ENCODE measurements at regions of chr15 and their contacts with region 1.

Region 1: DNA sequence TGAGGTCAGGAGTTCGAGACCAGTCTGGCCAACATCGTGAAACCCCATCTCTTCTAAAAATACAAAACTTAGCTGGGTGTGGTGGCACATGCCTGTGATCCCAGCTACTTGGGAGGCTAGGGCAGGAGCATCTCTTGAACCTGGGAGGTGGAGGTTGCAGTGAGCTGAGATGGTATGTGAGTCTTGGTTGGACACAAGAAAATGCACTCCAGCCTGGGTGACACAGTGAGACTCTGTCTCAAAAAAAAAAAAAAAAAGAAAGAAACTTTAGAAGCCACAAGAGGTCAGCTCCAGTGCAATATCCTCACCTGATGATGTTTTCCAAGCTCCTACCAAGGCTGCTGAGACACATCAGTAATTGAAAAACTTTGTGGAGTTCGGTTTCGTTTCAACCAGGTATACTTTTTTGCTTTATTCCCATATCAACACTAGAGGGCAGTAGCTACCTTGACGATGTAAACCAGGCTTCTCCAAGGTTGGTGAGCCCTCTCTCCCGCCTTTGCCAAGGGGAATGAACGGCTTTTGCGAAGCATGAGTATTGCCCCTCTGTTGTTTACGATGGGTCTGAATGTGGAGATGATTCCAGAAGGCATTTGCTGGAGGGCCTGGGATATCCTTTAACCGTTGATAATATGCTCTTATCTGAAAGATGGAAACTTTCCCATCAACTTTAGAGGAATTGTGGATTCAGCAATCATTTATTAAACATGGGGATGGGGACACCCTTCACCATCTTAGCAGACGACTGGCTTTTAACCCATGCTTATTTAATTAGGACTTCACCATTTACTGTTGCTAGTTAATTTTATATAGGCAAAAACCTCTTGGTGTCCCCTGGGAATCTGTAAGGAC is 202.8 kb downstream of the SV2B start:
- DNase-seq: peak in 4 of 9 experiments; percentile 33 to 74 (median 60)
- ATAC-seq: peak; percentile 48
- H3K4me3 ChIP-seq: no peak overlapping the region
- H3K4me3 Mint-ChIP-seq: no peak overlapping the region
- H3K27ac ChIP-seq: no peak overlapping the region
- H3K27ac Mint-ChIP-seq: no peak overlapping the region
- H3K4me1 ChIP-seq: peaks cover 26% of the 10 kb centered on the region
- H3K4me1 Mint-ChIP-seq: peaks cover 27% of the 10 kb centered on the region
- H3K27me3 ChIP-seq: peaks cover 0 to 2% of the 10 kb centered on the region in 2 experiments
- H3K27me3 Mint-ChIP-seq: peaks cover 11% of the 10 kb centered on the region
- CTCF ChIP-seq: peak; percentile 87

Region 2: DNA sequence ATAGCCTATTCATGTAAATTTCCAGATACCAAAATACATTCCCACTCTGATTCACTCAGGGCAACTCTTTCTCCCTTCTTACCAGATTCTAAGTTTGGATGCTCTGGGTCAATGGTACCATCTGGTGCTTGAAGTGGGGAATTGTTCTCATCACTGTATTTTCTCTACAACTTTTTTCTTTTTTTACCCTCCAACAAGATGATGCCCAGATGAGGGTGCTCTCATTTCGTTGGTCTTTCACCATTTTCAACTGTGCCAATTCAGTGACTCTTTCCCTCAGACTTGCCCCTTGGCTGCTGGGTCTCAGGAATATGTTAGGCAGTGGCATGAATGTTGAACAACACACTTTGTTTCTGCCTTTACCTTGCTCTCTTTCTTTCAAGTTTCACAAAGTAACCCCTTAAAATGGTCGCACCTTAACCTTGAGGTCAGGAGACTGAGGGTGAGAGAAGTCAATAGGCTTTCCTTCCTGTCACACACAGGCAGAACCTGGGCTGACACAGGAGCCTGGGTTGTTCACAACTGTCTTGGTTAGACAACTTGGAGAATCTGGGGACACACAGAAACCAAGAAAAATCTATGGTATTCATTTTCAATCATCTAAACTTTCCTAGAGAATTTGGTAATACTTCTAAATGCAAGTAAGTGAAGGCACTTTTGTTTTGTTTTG is 220.0 kb after region 1 on chr15:
- CTCF ChIA-PET with region 1: interaction called, 3 read pairs
- POLR2A ChIA-PET with region 1: no interaction called
- intact Hi-C with region 1: loop called in 1 of 2 experiments (anchors 1 kb)
- DNase-seq: peak in 2 of 9 experiments; percentile 56 to 66
- ATAC-seq: no peak
- H3K4me3 ChIP-seq: no peak overlapping the region
- H3K4me3 Mint-ChIP-seq: no peak overlapping the region
- H3K27ac ChIP-seq: no peak overlapping the region
- H3K27ac Mint-ChIP-seq: peak overlapping the region; percentile 33
- H3K4me1 ChIP-seq: peaks cover 14% of the 10 kb centered on the region
- H3K4me1 Mint-ChIP-seq: peaks cover 11% of the 10 kb centered on the region
- H3K27me3 ChIP-seq: no peaks in the 10 kb centered on the region
- H3K27me3 Mint-ChIP-seq: peaks cover 10% of the 10 kb centered on the region
- CTCF ChIP-seq: peak; percentile 33

Region 3: GRCh38 chr15:91852741-91853510 is 550.1 kb after region 1 on chr15:
- CTCF ChIA-PET with region 1: interaction called, 3 read pairs
- POLR2A ChIA-PET with region 1: no interaction called
- intact Hi-C with region 1: loop called (anchors 2 to 10 kb)
- DNase-seq: peak; percentile 58 to 88 (median 72)
- ATAC-seq: peak; percentile 57
- H3K4me3 ChIP-seq: peak overlapping the region; percentile 59 to 62
- H3K4me3 Mint-ChIP-seq: peak overlapping the region; percentile 86
- H3K27ac ChIP-seq: peak overlapping the region; percentile 56 to 57
- H3K27ac Mint-ChIP-seq: peak overlapping the region; percentile 91
- H3K4me1 ChIP-seq: peaks cover 56% of the 10 kb centered on the region
- H3K4me1 Mint-ChIP-seq: peaks cover 58% of the 10 kb centered on the region
- H3K27me3 ChIP-seq: no peaks in the 10 kb centered on the region
- H3K27me3 Mint-ChIP-seq: no peaks in the 10 kb centered on the region
- CTCF ChIP-seq: peak; percentile 71

Region 4: GRCh38 chr15:91885714-91886270 is 583.0 kb after region 1 on chr15:
- CTCF ChIA-PET with region 1: no interaction called
- POLR2A ChIA-PET with region 1: no interaction called
- intact Hi-C with region 1: no loop called
- DNase-seq: no peak
- ATAC-seq: no peak
- H3K4me3 ChIP-seq: no peak overlapping the region
- H3K4me3 Mint-ChIP-seq: no peak overlapping the region
- H3K27ac ChIP-seq: no peak overlapping the region
- H3K27ac Mint-ChIP-seq: no peak overlapping the region
- H3K4me1 ChIP-seq: no peaks in the 10 kb centered on the region
- H3K4me1 Mint-ChIP-seq: peaks cover 7% of the 10 kb centered on the region
- H3K27me3 ChIP-seq: no peaks in the 10 kb centered on the region
- H3K27me3 Mint-ChIP-seq: no peaks in the 10 kb centered on the region
- CTCF ChIP-seq: no peak

Region 5: DNA sequence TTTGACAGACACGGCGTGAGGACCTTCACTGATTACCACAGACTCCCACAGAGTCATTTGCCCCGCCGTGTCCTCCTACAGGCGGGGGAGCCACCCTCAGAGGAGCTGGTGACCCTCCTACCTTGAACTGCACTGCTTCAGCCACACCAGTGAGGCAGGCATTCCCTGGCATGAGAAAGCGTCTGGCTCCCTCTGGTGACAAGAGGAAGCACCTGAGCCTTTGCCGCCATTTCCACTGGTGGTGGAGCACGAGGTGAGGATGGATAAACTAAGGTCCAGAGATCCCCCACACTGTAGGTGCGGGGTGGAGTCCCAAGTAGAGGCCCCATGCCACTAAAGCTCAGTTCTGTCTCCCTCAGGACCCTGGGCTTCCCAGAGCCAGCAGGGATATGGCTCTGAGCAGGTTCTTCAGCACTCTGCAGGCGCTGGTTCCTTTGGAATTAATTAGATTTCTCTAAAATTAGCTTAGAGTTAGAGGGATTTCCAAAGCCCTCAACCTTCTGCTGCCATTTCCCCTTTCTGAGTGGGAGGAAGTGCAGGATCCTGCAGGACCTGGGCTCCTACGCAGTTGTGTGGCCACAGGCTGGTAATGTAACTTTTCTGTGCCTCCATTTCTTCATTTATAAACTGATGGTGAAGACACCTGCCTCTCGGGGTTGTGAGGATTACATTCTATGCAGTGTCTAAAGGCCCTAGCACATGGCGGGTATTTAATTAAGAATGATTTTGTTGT is 774.7 kb after region 1 on chr15:
- CTCF ChIA-PET with region 1: interaction called, 13 read pairs
- POLR2A ChIA-PET with region 1: no interaction called
- intact Hi-C with region 1: loop called in 1 of 2 experiments (anchors 1 kb)
- DNase-seq: peak in 8 of 9 experiments; percentile 35 to 67 (median 52)
- ATAC-seq: no peak
- H3K4me3 ChIP-seq: no peak overlapping the region
- H3K4me3 Mint-ChIP-seq: no peak overlapping the region
- H3K27ac ChIP-seq: no peak overlapping the region
- H3K27ac Mint-ChIP-seq: no peak overlapping the region
- H3K4me1 ChIP-seq: peaks cover 7% of the 10 kb centered on the region
- H3K4me1 Mint-ChIP-seq: peaks cover 23% of the 10 kb centered on the region
- H3K27me3 ChIP-seq: no peaks in the 10 kb centered on the region
- H3K27me3 Mint-ChIP-seq: no peaks in the 10 kb centered on the region
- CTCF ChIP-seq: peak; percentile 51